PC-9 (cell line): ENCODE measurements at regions of chr1 and their contacts with region 1.

Region 1: GRCh38 chr1:109655601-109656519 is at the start of gene GSTM4:
- DNase-seq: peak; percentile 43 to 50
- H3K4me3 ChIP-seq: peak within 1 kb of the TSS; percentile 54
- H3K27ac ChIP-seq: no peak within 1 kb of the TSS
- H3K4me1 ChIP-seq: peaks cover 67% of the 10 kb centered on the region
- H3K27me3 ChIP-seq: no peaks in the 10 kb centered on the region
- CTCF ChIP-seq: no peak
- total RNA-seq, gene GSTM4: 38.8 and 52.0 TPM in 2 replicates

Region 2: GRCh38 chr1:109718491-109718890 is 62.6 kb after region 1 on chr1:
- CTCF ChIA-PET with region 1: interaction called, 5 read pairs
- POLR2A ChIA-PET with region 1: no interaction called
- intact Hi-C with region 1: loop called (anchors 5 kb)
- DNase-seq: peak in 1 of 2 experiments; percentile 67
- H3K4me3 ChIP-seq: no peak overlapping the region
- H3K27ac ChIP-seq: peak overlapping the region; percentile 92
- H3K4me1 ChIP-seq: peaks cover 53% of the 10 kb centered on the region
- H3K27me3 ChIP-seq: no peaks in the 10 kb centered on the region
- CTCF ChIP-seq: peak; percentile 25; the same call in 1 of the 2 replicates

Region 3: DNA sequence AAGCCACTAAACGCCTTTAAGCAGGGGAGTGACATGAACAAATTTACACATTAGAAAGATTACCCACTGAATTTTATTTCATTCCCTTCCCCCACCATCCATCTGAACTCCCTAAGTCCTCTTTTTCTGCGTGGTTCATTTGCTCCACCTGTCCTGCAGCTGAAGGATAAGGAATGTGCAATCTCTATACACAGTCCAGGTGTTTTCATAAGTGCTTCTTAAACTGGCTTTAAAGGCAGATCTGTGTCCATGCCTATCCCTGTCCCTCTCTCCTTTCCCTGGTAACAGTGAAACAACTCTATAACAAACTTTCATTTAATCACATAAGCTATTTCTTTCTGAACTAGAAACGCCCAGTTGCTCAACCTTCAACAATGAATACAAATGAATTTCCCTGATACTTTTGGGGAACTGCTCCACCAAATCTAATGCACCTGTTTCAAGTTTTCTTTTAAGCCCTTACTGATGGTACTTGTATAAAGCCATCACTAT is 76.6 kb after region 1 on chr1:
- CTCF ChIA-PET with region 1: no interaction called
- POLR2A ChIA-PET with region 1: no interaction called
- intact Hi-C with region 1: no loop called
- DNase-seq: no peak
- H3K4me3 ChIP-seq: no peak overlapping the region
- H3K27ac ChIP-seq: no peak overlapping the region
- H3K4me1 ChIP-seq: peaks cover 24% of the 10 kb centered on the region
- H3K27me3 ChIP-seq: no peaks in the 10 kb centered on the region
- CTCF ChIP-seq: no peak